ENCODE measurements at regions of chr9 and their contacts with region 1.

Region 1: GRCh38 chr9:27333241-27334052 is 36.5 kb upstream of the EQTN start:
- DNase-seq: peak in 4 of 5 donors; percentile 51 to 64 (median 58)
- ATAC-seq: peak; percentile 89 to 97 (median 90)
- H3K4me3 ChIP-seq: no peak overlapping the region
- H3K27ac ChIP-seq: no peak overlapping the region
- H3K4me1 ChIP-seq: peaks cover 0 to 17% (median 7%) of the 10 kb centered on the region in 12 donors
- H3K27me3 ChIP-seq: no peaks in the 10 kb centered on the region
- CTCF ChIP-seq: peak; percentile 83 to 93 (median 90)
- POLR2A ChIP-seq: no peak

Region 2: GRCh38 chr9:27379311-27380251 is 46.1 kb after region 1 on chr9:
- intact Hi-C with region 1: loop called in 1 of 10 experiments (anchors 5 kb)
- DNase-seq: no peak
- ATAC-seq: no peak
- H3K4me3 ChIP-seq: no peak overlapping the region
- H3K27ac ChIP-seq: no peak overlapping the region
- H3K4me1 ChIP-seq: no peaks in the 10 kb centered on the region
- H3K27me3 ChIP-seq: no peaks in the 10 kb centered on the region
- CTCF ChIP-seq: no peak
- POLR2A ChIP-seq: no peak

Region 3: DNA sequence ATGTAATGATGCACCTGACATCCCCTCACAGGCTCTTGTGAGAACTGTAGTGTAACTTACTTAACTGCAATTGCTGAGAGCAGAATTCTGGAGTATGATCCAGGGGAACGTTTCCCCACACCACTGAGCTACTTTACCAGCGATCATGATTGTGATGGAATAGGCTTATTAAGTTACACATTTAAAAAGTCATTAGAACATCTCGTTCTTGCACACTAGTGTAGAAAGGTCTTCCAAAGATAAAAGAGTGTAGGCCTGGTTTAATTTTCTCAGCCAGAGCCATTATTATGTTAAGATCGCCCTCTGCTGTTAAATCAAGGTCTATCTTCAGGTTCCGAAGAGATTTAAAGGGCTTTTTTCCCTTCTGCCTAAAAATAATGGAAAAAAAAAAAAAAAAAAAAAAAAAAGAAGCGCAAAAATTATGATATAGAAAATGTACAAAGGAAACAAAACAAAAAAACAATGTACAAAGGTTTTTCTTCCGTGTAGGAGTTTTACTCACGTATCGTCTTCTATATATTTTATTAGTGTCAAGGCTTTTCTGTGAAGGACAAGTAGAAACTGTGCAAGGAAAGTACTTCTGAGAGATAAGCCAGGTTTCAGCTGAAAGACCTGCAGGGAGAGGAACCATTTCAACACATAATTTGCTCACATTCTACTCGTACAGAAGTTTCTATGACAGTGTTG is 214.8 kb after region 1 on chr9:
- intact Hi-C with region 1: loop called in 9 of 10 experiments (anchors 1 to 5 kb)
- DNase-seq: no peak
- ATAC-seq: peak; percentile 77 to 88 (median 84)
- H3K4me3 ChIP-seq: no peak overlapping the region
- H3K27ac ChIP-seq: peak overlapping the region in 3 of 12 donors; percentile 2 to 39 (median 34)
- H3K4me1 ChIP-seq: peaks cover 0 to 6% (median 0%) of the 10 kb centered on the region in 12 donors
- H3K27me3 ChIP-seq: no peaks in the 10 kb centered on the region
- CTCF ChIP-seq: peak; percentile 25 to 67 (median 54)
- POLR2A ChIP-seq: no peak

Region 4: GRCh38 chr9:27558307-27558706 is 224.9 kb after region 1 on chr9:
- intact Hi-C with region 1: loop called in 1 of 10 experiments (anchors 5 kb)
- DNase-seq: no peak
- ATAC-seq: no peak
- H3K4me3 ChIP-seq: no peak overlapping the region
- H3K27ac ChIP-seq: no peak overlapping the region
- H3K4me1 ChIP-seq: no peaks in the 10 kb centered on the region
- H3K27me3 ChIP-seq: no peaks in the 10 kb centered on the region
- CTCF ChIP-seq: no peak
- POLR2A ChIP-seq: no peak